ENCODE measurements at regions of chr21 and their contacts with region 1.

Region 1: GRCh38 chr21:42818328-42818749 is 61.0 kb downstream of the WDR4 start:
- DNase-seq: peak; percentile 56 to 76
- ATAC-seq: peak; percentile 77 to 89 (median 84)
- H3K4me3 ChIP-seq: no peak overlapping the region
- H3K4me3 Mint-ChIP-seq: no peak overlapping the region
- H3K27ac ChIP-seq: no peak overlapping the region
- H3K27ac Mint-ChIP-seq: no peak overlapping the region
- H3K4me1 ChIP-seq: no peaks in the 10 kb centered on the region
- H3K4me1 Mint-ChIP-seq: no peaks in the 10 kb centered on the region
- H3K27me3 ChIP-seq: peaks cover 13% of the 10 kb centered on the region
- H3K27me3 Mint-ChIP-seq: peaks cover 14 to 18% of the 10 kb centered on the region in 2 donors
- CTCF ChIP-seq: peak; percentile 96

Region 2: DNA sequence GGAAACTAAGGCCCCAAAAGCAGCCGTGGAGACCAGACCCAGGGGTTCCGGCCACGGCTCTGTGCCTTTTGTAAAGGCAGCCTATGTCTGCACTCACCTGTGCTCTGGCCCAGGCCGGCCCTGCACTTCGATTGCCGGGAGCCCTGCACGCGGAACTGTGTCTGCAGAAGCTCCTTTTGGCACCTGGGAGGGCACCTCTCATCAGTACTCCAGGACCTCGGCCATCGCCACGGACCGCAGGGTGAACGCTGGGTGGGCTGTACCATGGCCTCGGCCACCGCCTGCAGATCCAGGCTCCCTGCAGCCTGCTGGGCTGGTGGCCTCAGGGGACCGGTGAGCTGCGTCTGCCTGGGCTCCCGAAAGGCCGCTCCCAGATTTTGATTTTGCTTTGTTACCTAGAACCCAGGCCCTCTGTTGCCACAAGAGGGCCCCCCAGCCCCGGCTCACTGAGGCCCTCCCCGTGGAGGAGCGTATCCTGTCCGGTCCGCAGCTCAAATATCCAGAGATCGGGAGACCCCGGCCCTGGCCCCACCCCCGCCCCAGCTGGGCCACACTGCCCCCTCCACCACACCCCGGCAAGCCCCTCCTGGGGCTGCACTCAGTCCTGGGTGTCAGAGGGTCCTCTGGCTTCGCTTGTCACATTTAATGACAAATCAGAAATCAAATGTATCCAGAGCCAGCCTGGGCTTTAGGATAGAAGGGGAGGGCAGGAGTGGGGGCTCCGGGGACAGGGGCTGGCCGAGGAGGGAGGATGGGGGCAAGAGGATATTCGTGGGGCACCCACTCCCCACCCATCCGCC is 225.1 kb before region 1 on chr21:
- intact Hi-C with region 1: loop called (anchors 2 kb)
- DNase-seq: peak; percentile 49 to 75
- ATAC-seq: peak; percentile 65 to 85 (median 82)
- H3K4me3 ChIP-seq: no peak overlapping the region
- H3K4me3 Mint-ChIP-seq: no peak overlapping the region
- H3K27ac ChIP-seq: no peak overlapping the region
- H3K27ac Mint-ChIP-seq: no peak overlapping the region
- H3K4me1 ChIP-seq: peaks cover 16% of the 10 kb centered on the region
- H3K4me1 Mint-ChIP-seq: peaks cover 0 to 5% of the 10 kb centered on the region in 2 donors
- H3K27me3 ChIP-seq: no peaks in the 10 kb centered on the region
- H3K27me3 Mint-ChIP-seq: peaks cover 8 to 14% of the 10 kb centered on the region in 2 donors
- CTCF ChIP-seq: peak; percentile 70

Region 3: GRCh38 chr21:42652527-42653230 is 165.7 kb before region 1 on chr21:
- intact Hi-C with region 1: loop called (anchors 5 kb)
- DNase-seq: no peak
- ATAC-seq: no peak
- H3K4me3 ChIP-seq: no peak overlapping the region
- H3K4me3 Mint-ChIP-seq: peak overlapping the region; percentile 83
- H3K27ac ChIP-seq: no peak overlapping the region
- H3K27ac Mint-ChIP-seq: peak overlapping the region in 1 of 2 donors; percentile 78
- H3K4me1 ChIP-seq: peaks cover 17% of the 10 kb centered on the region
- H3K4me1 Mint-ChIP-seq: peaks cover 0 to 16% of the 10 kb centered on the region in 2 donors
- H3K27me3 ChIP-seq: peaks cover 18% of the 10 kb centered on the region
- H3K27me3 Mint-ChIP-seq: peaks cover 35 to 42% of the 10 kb centered on the region in 2 donors
- CTCF ChIP-seq: no peak

Region 4: GRCh38 chr21:42684109-42684916 is 134.0 kb before region 1 on chr21:
- intact Hi-C with region 1: loop called (anchors 10 kb)
- DNase-seq: peak; percentile 57 to 69
- ATAC-seq: peak; percentile 77 to 81 (median 78)
- H3K4me3 ChIP-seq: no peak overlapping the region
- H3K4me3 Mint-ChIP-seq: peak overlapping the region; percentile 85
- H3K27ac ChIP-seq: peak overlapping the region; percentile 65
- H3K27ac Mint-ChIP-seq: peak overlapping the region; percentile 83 to 94
- H3K4me1 ChIP-seq: peaks cover 58% of the 10 kb centered on the region
- H3K4me1 Mint-ChIP-seq: peaks cover 42 to 44% of the 10 kb centered on the region in 2 donors
- H3K27me3 ChIP-seq: peaks cover 2% of the 10 kb centered on the region
- H3K27me3 Mint-ChIP-seq: peaks cover 0 to 4% of the 10 kb centered on the region in 2 donors
- CTCF ChIP-seq: no peak

Region 5: GRCh38 chr21:42806509-42807140 is 11.7 kb before region 1 on chr21:
- intact Hi-C with region 1: no loop called
- DNase-seq: no peak
- ATAC-seq: no peak
- H3K4me3 ChIP-seq: no peak overlapping the region
- H3K4me3 Mint-ChIP-seq: no peak overlapping the region
- H3K27ac ChIP-seq: no peak overlapping the region
- H3K27ac Mint-ChIP-seq: no peak overlapping the region
- H3K4me1 ChIP-seq: no peaks in the 10 kb centered on the region
- H3K4me1 Mint-ChIP-seq: no peaks in the 10 kb centered on the region
- H3K27me3 ChIP-seq: no peaks in the 10 kb centered on the region
- H3K27me3 Mint-ChIP-seq: peaks cover 23 to 40% of the 10 kb centered on the region in 2 donors
- CTCF ChIP-seq: no peak

Region 6: DNA sequence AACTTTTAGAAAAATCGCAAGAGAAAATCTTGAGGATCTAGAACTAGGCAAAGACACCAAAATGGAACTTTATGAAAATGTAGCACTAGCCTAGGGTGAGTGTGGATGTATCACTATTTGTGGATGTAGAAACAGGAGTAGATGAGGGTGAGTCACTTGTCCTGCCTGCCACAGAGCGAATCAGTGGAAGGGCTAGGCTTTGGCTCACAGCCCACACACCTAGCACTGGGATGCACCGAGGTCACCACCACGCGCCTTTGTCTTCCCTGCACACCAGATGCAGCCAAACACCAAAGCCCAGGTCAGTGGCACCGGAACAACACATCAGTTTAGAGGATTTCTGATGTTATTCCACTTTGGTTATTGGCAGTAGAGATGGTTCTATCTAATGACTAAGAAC is 194.3 kb after region 1 on chr21:
- intact Hi-C with region 1: no loop called
- DNase-seq: no peak
- ATAC-seq: no peak
- H3K4me3 ChIP-seq: no peak overlapping the region
- H3K4me3 Mint-ChIP-seq: no peak overlapping the region
- H3K27ac ChIP-seq: no peak overlapping the region
- H3K27ac Mint-ChIP-seq: no peak overlapping the region
- H3K4me1 ChIP-seq: peaks cover 4% of the 10 kb centered on the region
- H3K4me1 Mint-ChIP-seq: peaks cover 0 to 6% of the 10 kb centered on the region in 2 donors
- H3K27me3 ChIP-seq: no peaks in the 10 kb centered on the region
- H3K27me3 Mint-ChIP-seq: no peaks in the 10 kb centered on the region
- CTCF ChIP-seq: no peak